ENCODE measurements at regions of chr16 and their contacts with region 1.

Region 1: GRCh38 chr16:89708441-89708931 is 7.0 kb upstream of the SPATA2L start:
- DNase-seq: no peak
- H3K4me3 ChIP-seq: no peak overlapping the region
- CTCF ChIP-seq: no peak
- POLR2A ChIP-seq: no peak

Region 2: GRCh38 chr16:88882358-88883030 is 826.0 kb before region 1 on chr16:
- intact Hi-C with region 1: no loop called
- DNase-seq: peak; percentile 53 to 90
- H3K4me3 ChIP-seq: no peak overlapping the region
- CTCF ChIP-seq: peak in 1 of 3 donors; percentile 26
- POLR2A ChIP-seq: no peak

Region 3: DNA sequence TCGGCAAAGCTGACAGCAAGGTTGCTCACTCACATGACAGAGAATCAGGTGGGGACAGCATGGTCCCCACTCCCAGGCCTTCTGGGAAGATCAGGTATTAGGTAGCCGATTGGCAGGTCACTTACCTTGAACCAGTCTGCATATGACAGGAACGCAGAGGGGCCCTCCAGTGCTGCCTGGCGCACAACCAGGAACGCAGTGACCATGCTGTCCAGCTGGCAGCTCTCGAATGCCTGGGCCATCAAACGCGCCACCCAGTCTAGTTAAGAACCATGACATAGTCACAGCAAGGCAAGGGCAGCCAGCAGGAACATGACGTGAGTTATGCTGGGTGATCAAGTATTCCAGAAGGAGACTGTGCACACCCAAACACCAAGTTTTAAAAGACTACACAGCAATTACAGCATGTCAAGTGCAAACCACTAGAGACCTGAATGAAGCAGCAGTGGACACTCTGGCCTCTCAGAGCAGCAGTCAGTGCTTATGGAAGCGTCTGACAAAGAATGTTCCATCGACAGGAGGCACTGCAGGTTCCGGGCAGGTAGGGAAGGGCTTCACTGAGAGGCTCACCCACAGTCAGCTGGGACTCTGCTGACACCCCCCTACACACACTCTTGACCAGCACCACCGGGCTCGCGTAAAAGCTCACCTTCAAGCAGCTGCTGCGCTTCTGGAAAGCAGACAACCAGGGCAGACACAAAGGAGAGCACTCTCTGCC is 83.0 kb after region 1 on chr16:
- intact Hi-C with region 1: loop called (anchors 5 kb)
- DNase-seq: no peak
- H3K4me3 ChIP-seq: no peak overlapping the region
- CTCF ChIP-seq: no peak
- POLR2A ChIP-seq: no peak

Region 4: DNA sequence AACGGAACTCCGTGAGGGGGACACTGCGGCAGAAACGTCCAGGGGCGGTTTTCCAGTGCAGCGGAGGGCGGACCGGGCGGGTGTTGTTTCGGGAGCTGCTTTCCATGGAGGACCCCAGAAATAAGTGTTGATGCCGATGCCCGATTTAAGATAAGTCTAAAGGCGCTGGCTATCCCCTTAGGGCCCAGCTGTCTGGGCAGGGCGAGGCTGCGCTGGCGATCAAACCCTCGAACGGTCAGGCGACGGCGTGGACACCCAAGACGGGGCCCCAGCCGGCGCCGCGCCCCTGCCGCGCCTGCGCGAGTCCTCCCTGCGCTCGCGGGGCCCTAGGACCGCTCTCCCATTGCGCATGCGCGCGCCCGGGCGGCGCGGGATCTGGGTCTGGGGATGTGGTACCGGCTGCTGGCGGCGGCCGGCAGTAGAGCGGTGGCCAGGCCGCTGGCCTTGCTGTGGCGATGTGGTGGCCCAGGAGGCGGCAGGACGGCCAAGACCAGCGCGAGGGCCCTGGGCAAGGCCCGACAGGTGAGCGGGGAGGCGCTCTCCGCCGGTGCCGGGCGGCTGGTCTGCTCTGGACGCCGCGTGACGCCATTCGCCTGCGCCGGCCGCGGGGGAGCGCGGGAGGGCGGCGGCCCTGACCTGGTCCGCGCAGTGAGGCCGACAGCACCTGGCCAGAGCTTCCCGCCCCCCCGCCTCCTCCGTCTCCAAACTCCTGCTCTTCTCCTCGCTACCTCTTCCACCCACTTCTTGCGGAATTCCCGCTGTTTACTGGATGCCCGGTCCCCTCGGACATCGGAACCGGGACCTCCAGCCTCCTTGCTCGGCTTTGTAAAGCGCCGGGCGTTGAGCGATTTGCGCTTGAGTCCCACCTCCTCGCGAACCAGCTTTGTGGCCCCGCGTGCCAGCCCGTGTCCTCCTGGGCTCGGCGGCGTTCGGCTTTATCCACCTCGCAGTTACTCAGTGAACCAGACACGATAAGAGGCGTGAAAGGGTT is 264.1 kb after region 1 on chr16:
- intact Hi-C with region 1: no loop called
- DNase-seq: peak; percentile 81 to 98
- H3K4me3 ChIP-seq: peak overlapping the region; percentile 68
- CTCF ChIP-seq: no peak
- POLR2A ChIP-seq: peak in 1 of 2 donors; percentile 15